CD14-positive monocyte (primary cell): ENCODE measurements at regions of chr2 and their contacts with region 1.

Region 1: GRCh38 chr2:64988420-64989125 is 626 bp upstream of the SLC1A4 start:
- DNase-seq: no peak
- H3K4me3 ChIP-seq: peak overlapping the region; percentile 64 to 91 (median 73)
- H3K4me3 Mint-ChIP-seq: peak overlapping the region; percentile 85 to 92
- H3K27ac ChIP-seq: peak overlapping the region; percentile 75 to 91
- H3K27ac Mint-ChIP-seq: peak overlapping the region; percentile 44 to 83 (median 73)
- H3K4me1 ChIP-seq: peaks cover 35 to 53% of the 10 kb centered on the region in 2 donors
- H3K4me1 Mint-ChIP-seq: peaks cover 59% of the 10 kb centered on the region
- H3K27me3 ChIP-seq: no peaks in the 10 kb centered on the region
- H3K27me3 Mint-ChIP-seq: peaks cover 0 to 1% (median 0%) of the 10 kb centered on the region in 3 donors
- CTCF ChIP-seq: peak; percentile 63

Region 2: DNA sequence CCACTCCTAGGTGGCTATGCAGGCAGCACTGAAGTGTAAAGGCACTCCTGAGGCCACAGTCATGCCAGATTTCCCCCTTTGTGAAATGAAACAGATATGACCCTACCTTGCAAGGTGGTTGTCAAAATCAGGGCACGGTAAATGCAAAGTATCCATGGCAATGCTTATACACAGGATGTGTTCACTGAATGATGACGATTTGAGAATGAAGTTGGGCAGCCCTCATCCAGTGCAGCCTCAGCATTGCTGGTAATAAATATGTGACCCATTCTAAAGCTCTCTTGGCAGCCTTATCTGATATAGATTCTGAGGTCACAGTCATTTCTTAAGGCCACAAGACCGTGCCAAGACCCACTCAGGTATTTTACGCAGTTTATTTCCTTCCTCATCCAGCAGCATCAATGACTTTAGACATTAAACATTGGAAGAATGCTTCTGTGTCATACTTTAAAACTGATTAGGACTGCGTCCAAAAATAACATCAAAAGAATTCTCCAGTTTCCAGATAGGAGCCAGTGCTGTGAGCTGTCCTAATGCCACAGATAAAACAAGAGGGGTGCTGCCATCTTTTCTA is 209.4 kb before region 1 on chr2:
- intact Hi-C with region 1: no loop called
- DNase-seq: no peak
- H3K4me3 ChIP-seq: no peak overlapping the region
- H3K4me3 Mint-ChIP-seq: no peak overlapping the region
- H3K27ac ChIP-seq: no peak overlapping the region
- H3K27ac Mint-ChIP-seq: no peak overlapping the region
- H3K4me1 ChIP-seq: peaks cover 0 to 12% of the 10 kb centered on the region in 2 donors
- H3K4me1 Mint-ChIP-seq: peaks cover 10% of the 10 kb centered on the region
- H3K27me3 ChIP-seq: no peaks in the 10 kb centered on the region
- H3K27me3 Mint-ChIP-seq: peaks cover 0 to 2% (median 0%) of the 10 kb centered on the region in 3 donors
- CTCF ChIP-seq: no peak

Region 3: DNA sequence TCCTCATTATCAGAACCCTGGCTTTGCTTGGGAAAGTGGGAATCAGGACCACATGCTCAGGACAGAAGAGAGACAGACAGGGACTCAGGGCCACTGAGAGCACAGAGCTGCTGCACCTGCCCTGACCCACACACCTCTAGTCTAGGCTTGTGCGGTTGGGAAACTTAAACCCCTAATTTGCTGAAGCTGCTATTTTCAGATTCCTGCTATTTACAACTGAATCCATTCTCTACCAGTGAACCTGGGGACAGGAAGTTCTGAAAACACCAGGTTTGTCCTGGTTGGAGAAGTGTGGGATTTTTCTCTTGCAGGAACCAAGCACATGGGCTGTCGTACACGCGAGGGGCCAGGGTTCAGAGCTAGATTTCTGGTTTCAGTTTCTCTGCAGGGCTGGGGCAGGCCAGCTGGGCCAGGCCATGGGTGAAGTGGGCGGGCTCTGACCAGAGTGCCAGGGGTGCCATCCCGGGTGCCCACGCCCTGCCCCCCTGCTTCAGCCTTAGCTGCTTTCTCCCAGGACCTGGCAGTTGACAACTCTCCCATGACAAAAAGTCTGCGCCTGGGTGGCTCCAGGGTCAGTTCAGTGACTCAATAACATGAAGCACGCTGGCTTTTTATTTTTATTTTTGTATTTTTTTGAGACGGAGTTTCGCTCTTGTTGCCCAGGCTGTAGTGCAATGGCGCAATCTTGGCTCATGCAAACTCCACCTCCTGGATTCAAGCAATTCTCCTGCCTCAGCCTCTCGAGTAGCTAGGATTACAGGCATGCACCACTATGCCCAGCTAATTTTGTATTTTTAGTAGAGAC is 50.7 kb before region 1 on chr2:
- intact Hi-C with region 1: loop called in 1 of 2 experiments (anchors 5 kb)
- DNase-seq: peak; percentile 54 to 62 (median 56)
- H3K4me3 ChIP-seq: peak overlapping the region; percentile 41 to 73 (median 42)
- H3K4me3 Mint-ChIP-seq: peak overlapping the region; percentile 80 to 82
- H3K27ac ChIP-seq: peak overlapping the region; percentile 71 to 89
- H3K27ac Mint-ChIP-seq: peak overlapping the region; percentile 78 to 95 (median 89)
- H3K4me1 ChIP-seq: peaks cover 62 to 69% of the 10 kb centered on the region in 2 donors
- H3K4me1 Mint-ChIP-seq: peaks cover 68% of the 10 kb centered on the region
- H3K27me3 ChIP-seq: no peaks in the 10 kb centered on the region
- H3K27me3 Mint-ChIP-seq: peaks cover 0 to 2% (median 2%) of the 10 kb centered on the region in 3 donors
- CTCF ChIP-seq: no peak

Region 4: GRCh38 chr2:65003037-65003436 is 14.5 kb after region 1 on chr2:
- intact Hi-C with region 1: no loop called
- DNase-seq: no peak
- H3K4me3 ChIP-seq: no peak overlapping the region
- H3K4me3 Mint-ChIP-seq: no peak overlapping the region
- H3K27ac ChIP-seq: no peak overlapping the region
- H3K27ac Mint-ChIP-seq: peak overlapping the region in 1 of 7 donors; percentile 41
- H3K4me1 ChIP-seq: no peaks in the 10 kb centered on the region
- H3K4me1 Mint-ChIP-seq: peaks cover 7% of the 10 kb centered on the region
- H3K27me3 ChIP-seq: no peaks in the 10 kb centered on the region
- H3K27me3 Mint-ChIP-seq: no peaks in the 10 kb centered on the region
- CTCF ChIP-seq: no peak

Region 5: DNA sequence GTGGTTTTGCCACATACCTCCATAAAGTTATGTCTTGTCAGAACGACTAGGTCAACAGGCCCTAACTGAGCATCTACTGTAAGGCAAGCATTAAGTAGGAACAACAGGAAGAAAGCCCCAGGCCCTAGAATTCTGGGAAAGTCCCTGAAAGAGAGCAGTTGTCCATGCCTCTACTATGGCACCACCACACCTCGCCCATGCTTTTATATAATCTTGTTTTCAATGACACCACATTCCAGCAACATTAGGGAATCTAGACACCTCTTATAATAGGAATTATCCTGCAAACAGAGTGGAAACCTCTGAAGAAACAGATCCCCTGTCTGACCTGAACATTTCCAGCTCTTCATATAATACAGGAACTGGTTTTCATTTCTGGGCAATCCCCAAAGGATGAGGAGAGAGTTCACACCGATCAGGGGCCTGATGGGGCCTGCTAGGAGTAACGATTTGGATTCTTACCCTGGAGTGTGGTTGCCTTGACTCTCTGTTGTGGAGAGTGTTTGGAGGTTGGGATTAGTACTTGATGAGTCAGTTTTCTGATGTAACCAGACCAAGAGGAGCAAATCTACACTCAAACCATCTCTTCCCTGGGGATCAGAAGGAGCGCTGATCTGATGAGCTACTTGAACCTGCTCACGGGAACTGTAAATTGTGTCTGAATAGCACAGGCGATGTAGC is 35.7 kb after region 1 on chr2:
- intact Hi-C with region 1: no loop called
- DNase-seq: no peak
- H3K4me3 ChIP-seq: no peak overlapping the region
- H3K4me3 Mint-ChIP-seq: no peak overlapping the region
- H3K27ac ChIP-seq: no peak overlapping the region
- H3K27ac Mint-ChIP-seq: peak overlapping the region in 3 of 7 donors; percentile 40 to 69 (median 62)
- H3K4me1 ChIP-seq: peaks cover 39 to 44% of the 10 kb centered on the region in 2 donors
- H3K4me1 Mint-ChIP-seq: peaks cover 45% of the 10 kb centered on the region
- H3K27me3 ChIP-seq: no peaks in the 10 kb centered on the region
- H3K27me3 Mint-ChIP-seq: no peaks in the 10 kb centered on the region
- CTCF ChIP-seq: no peak

Region 6: GRCh38 chr2:65035346-65035943 is 46.9 kb after region 1 on chr2:
- intact Hi-C with region 1: loop called in 1 of 2 experiments (anchors 5 kb)
- DNase-seq: no peak
- H3K4me3 ChIP-seq: no peak overlapping the region
- H3K4me3 Mint-ChIP-seq: no peak overlapping the region
- H3K27ac ChIP-seq: no peak overlapping the region
- H3K27ac Mint-ChIP-seq: no peak overlapping the region
- H3K4me1 ChIP-seq: peaks cover 24 to 27% of the 10 kb centered on the region in 2 donors
- H3K4me1 Mint-ChIP-seq: peaks cover 29% of the 10 kb centered on the region
- H3K27me3 ChIP-seq: no peaks in the 10 kb centered on the region
- H3K27me3 Mint-ChIP-seq: peaks cover 0 to 2% (median 0%) of the 10 kb centered on the region in 3 donors
- CTCF ChIP-seq: no peak